B cell (primary cell): ENCODE measurements at regions of chr6 and their contacts with region 1.

Region 1: DNA sequence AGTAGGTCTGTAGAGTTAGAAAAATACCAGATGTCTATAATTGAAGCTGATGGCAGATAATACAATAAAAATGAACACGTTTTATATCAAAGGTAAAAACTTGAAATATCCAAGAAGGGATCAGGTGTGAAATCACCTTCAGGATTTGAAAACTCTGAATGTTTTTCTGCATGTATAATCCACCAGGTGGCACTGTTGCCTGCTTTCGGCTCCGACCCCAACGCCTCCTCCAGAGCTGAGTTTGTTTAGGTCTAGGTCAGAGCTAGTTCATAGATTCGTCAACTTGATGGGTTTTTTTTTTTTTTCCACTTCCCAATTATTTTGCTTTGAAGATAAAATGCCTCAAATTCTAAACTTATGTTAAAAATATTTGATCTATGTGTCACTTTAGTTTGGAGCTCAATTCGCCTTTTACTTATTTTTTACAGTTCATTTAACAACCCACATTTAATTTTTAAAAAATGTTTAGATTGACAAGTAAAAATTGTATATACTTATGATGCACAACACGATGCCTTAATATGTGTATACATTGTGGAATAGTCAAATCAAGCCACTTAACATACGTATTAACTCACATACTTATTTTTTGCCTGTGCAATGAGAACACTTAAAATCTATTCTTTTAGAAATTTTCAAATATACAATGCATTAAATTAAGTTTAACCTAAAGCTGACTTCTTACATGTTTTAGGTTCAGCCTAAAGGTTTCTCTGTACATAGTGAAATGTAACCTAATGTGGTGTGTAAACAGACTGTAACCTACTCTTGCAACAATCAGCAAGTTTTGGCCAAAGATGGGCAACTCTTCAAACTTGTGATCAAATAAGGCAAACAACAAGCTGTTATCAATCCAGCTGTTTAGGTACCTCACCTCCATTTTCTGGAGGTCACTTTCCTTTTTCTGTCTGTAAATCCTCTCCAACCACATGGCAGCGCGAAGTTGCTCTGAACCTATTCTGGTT is 39.4 kb upstream of the ENPP4 start:
- DNase-seq: peak; percentile 70
- ATAC-seq: peak; percentile 54
- H3K4me3 ChIP-seq: no peak overlapping the region
- H3K4me3 Mint-ChIP-seq: no peak overlapping the region
- H3K27ac ChIP-seq: no peak overlapping the region
- H3K27ac Mint-ChIP-seq: no peak overlapping the region
- H3K4me1 ChIP-seq: no peaks in the 10 kb centered on the region
- H3K4me1 Mint-ChIP-seq: no peaks in the 10 kb centered on the region
- H3K27me3 ChIP-seq: peaks cover 0 to 3% (median 1%) of the 10 kb centered on the region in 4 experiments
- H3K27me3 Mint-ChIP-seq: peaks cover 24% of the 10 kb centered on the region
- CTCF ChIP-seq: peak; percentile 93

Region 2: GRCh38 chr6:46104209-46104608 is 13.8 kb after region 1 on chr6:
- CTCF ChIA-PET with region 1: interaction called, 12 read pairs
- POLR2A ChIA-PET with region 1: no interaction called
- intact Hi-C with region 1: no loop called
- DNase-seq: no peak
- ATAC-seq: no peak
- H3K4me3 ChIP-seq: no peak overlapping the region
- H3K4me3 Mint-ChIP-seq: no peak overlapping the region
- H3K27ac ChIP-seq: no peak overlapping the region
- H3K27ac Mint-ChIP-seq: no peak overlapping the region
- H3K4me1 ChIP-seq: no peaks in the 10 kb centered on the region
- H3K4me1 Mint-ChIP-seq: no peaks in the 10 kb centered on the region
- H3K27me3 ChIP-seq: no peaks in the 10 kb centered on the region
- H3K27me3 Mint-ChIP-seq: no peaks in the 10 kb centered on the region
- CTCF ChIP-seq: no peak

Region 3: GRCh38 chr6:46419576-46420002 is 329.2 kb after region 1 on chr6:
- CTCF ChIA-PET with region 1: interaction called, 340 read pairs
- POLR2A ChIA-PET with region 1: no interaction called
- intact Hi-C with region 1: no loop called
- DNase-seq: peak; percentile 40
- ATAC-seq: no peak
- H3K4me3 ChIP-seq: no peak overlapping the region
- H3K4me3 Mint-ChIP-seq: no peak overlapping the region
- H3K27ac ChIP-seq: no peak overlapping the region
- H3K27ac Mint-ChIP-seq: no peak overlapping the region
- H3K4me1 ChIP-seq: no peaks in the 10 kb centered on the region
- H3K4me1 Mint-ChIP-seq: no peaks in the 10 kb centered on the region
- H3K27me3 ChIP-seq: no peaks in the 10 kb centered on the region
- H3K27me3 Mint-ChIP-seq: peaks cover 7% of the 10 kb centered on the region
- CTCF ChIP-seq: peak; percentile 69

Region 4: GRCh38 chr6:46491628-46492547 is 401.5 kb after region 1 on chr6:
- CTCF ChIA-PET with region 1: no interaction called
- POLR2A ChIA-PET with region 1: no interaction called
- intact Hi-C with region 1: loop called (anchors 10 kb)
- DNase-seq: peak; percentile 34
- ATAC-seq: peak; percentile 43
- H3K4me3 ChIP-seq: peak overlapping the region in 4 of 5 experiments; percentile 45 to 77 (median 64)
- H3K4me3 Mint-ChIP-seq: peak overlapping the region; percentile 66
- H3K27ac ChIP-seq: no peak overlapping the region
- H3K27ac Mint-ChIP-seq: no peak overlapping the region
- H3K4me1 ChIP-seq: peaks cover 8 to 14% of the 10 kb centered on the region in 2 donors
- H3K4me1 Mint-ChIP-seq: peaks cover 11% of the 10 kb centered on the region
- H3K27me3 ChIP-seq: peaks cover 0 to 41% (median 31%) of the 10 kb centered on the region in 4 experiments
- H3K27me3 Mint-ChIP-seq: peaks cover 70% of the 10 kb centered on the region
- CTCF ChIP-seq: peak; percentile 23